Activated CD4-positive, alpha-beta memory T cell treated with anti-CD3 and anti-CD28 coated beads for 36 hours (primary cell): ENCODE measurements at regions of chr2 and their contacts with region 1.

Region 1: GRCh38 chr2:189440947-189441708 is at the start of gene WDR75:
- DNase-seq: peak; percentile 94
- H3K4me3 Mint-ChIP-seq: no peak within 1 kb of the TSS
- H3K27ac Mint-ChIP-seq: peak within 1 kb of the TSS; percentile 99
- H3K4me1 Mint-ChIP-seq: peaks cover 11% of the 10 kb centered on the region
- H3K27me3 Mint-ChIP-seq: no peaks in the 10 kb centered on the region
- total RNA-seq, gene WDR75: 66.4 to 68.8 TPM

Region 2: GRCh38 chr2:189302274-189302948 is 138.7 kb before region 1 on chr2:
- CTCF ChIA-PET with region 1: interaction called, 3 read pairs
- POLR2A ChIA-PET with region 1: no interaction called
- intact Hi-C with region 1: loop called (anchors 2 kb)
- DNase-seq: no peak
- H3K4me3 Mint-ChIP-seq: peak overlapping the region; percentile 0
- H3K27ac Mint-ChIP-seq: peak overlapping the region; percentile 83
- H3K4me1 Mint-ChIP-seq: peaks cover 72% of the 10 kb centered on the region
- H3K27me3 Mint-ChIP-seq: no peaks in the 10 kb centered on the region

Region 3: GRCh38 chr2:189641590-189641989 is 200.5 kb after region 1 on chr2:
- CTCF ChIA-PET with region 1: no interaction called
- POLR2A ChIA-PET with region 1: no interaction called
- intact Hi-C with region 1: loop called (anchors 1 kb)
- DNase-seq: peak; percentile 74
- H3K4me3 Mint-ChIP-seq: no peak overlapping the region
- H3K27ac Mint-ChIP-seq: peak overlapping the region; percentile 36
- H3K4me1 Mint-ChIP-seq: peaks cover 27% of the 10 kb centered on the region
- H3K27me3 Mint-ChIP-seq: no peaks in the 10 kb centered on the region

Region 4: GRCh38 chr2:190319555-190320498 is 878.7 kb after region 1 on chr2 and contains the start of gene HIBCH:
- CTCF ChIA-PET with region 1: no interaction called
- POLR2A ChIA-PET with region 1: no interaction called
- intact Hi-C with region 1: loop called (anchors 5 kb)
- DNase-seq: peak; percentile 96
- H3K4me3 Mint-ChIP-seq: peak within 1 kb of the TSS; percentile 87
- H3K27ac Mint-ChIP-seq: peak within 1 kb of the TSS; percentile 94
- H3K4me1 Mint-ChIP-seq: peaks cover 52% of the 10 kb centered on the region
- H3K27me3 Mint-ChIP-seq: no peaks in the 10 kb centered on the region
- total RNA-seq, gene HIBCH: 33.9 to 37.8 TPM